ENCODE measurements at regions of chr3 and their contacts with region 1.

Region 1: DNA sequence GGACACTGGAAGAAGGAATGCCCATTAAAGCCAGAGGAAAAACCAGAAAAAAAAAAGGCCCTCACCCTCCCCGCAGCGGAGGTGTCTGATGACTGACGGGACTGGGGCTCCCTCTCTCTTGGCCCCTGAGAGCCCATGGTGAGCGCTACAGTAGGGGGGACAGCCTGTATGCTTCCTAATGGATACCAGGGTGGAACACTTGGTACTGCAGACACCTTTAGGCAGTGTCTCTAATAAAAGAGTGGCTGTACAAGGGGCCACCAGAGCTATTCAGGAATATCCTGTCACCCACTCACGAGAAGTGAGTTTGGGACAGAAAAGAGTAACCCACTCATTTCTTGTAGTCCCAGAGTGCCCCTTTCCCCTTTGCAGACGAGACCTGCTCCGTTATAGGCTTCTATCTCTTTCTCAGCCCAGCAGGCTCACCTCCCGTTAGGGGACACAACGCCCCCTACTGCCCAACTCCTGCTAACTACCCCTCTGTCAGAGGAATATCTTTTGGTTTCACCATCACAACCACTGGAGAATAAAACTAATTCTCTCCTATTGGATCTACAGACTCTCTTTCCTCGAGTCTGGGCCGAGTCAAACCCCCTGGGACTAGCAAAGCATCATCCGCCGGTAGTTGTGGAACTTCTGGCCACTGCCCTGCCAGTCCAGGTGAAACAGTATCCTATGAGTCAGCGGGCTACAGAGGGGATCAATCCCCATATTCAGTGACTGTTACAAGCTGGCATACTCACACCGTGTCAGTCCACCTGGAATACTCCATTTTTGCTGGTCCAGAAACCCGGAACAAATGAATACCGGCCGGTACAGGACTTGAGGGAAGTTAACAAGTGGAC is 40.8 kb downstream of the ZBTB11 start:
- DNase-seq: peak in 1 of 2 experiments; percentile 89
- H3K4me3 ChIP-seq: no peak overlapping the region
- H3K27ac ChIP-seq: no peak overlapping the region
- H3K4me1 ChIP-seq: peaks cover 0 to 6% (median 2%) of the 10 kb centered on the region in 4 experiments; a peak in 5 of 7 replicates
- H3K27me3 ChIP-seq: no peaks in the 10 kb centered on the region
- CTCF ChIP-seq: peak; percentile 44 to 66 (median 63)
- EP300 ChIP-seq: 0 out of 3 replicates have a peak, but pooled peaks of 1 of the 2 experiments have one; percentile 17
- POLR2A ChIP-seq: no peak
- RAD21 ChIP-seq: peak; percentile 72 to 76

Region 2: DNA sequence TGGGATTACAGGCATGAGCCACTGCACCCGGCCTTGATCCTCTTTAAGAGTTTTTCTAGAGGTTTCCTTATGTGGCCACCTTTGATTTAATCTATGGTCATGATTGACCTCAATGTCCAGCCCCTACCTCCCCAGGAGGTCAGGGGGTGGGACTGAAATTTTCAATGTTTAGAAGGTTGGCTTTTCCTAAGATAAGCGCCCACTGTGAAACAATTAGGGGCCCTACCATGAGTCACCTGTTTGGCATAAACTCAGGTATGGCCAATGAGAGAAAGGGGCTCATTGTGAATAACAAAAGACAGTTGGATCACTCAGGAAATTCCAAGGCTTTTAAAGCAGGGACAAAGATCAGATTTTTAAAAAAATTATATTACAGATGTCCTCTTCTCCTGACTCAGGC is 10.3 kb before region 1 on chr3:
- CTCF ChIA-PET with region 1: interaction called, 28 read pairs
- POLR2A ChIA-PET with region 1: no interaction called
- DNase-seq: no peak
- H3K4me3 ChIP-seq: no peak overlapping the region
- H3K27ac ChIP-seq: no peak overlapping the region
- H3K4me1 ChIP-seq: peaks cover 0 to 4% (median 0%) of the 10 kb centered on the region in 4 experiments; a peak in 4 of 7 replicates
- H3K27me3 ChIP-seq: no peaks in the 10 kb centered on the region
- CTCF ChIP-seq: no peak
- EP300 ChIP-seq: no peak
- POLR2A ChIP-seq: no peak
- RAD21 ChIP-seq: no peak